Caco-2 (cell line): ENCODE measurements at regions of chr17 and their contacts with region 1.

Region 1: GRCh38 chr17:73956669-73957465 is 246.6 kb upstream of the RPL38 start:
- DNase-seq: peak; percentile 71 to 74
- H3K4me3 ChIP-seq: no peak overlapping the region
- H3K4me3 Mint-ChIP-seq: no peak overlapping the region
- H3K27ac Mint-ChIP-seq: no peak overlapping the region
- H3K4me1 ChIP-seq: peaks cover 18% of the 10 kb centered on the region
- H3K4me1 Mint-ChIP-seq: no peaks in the 10 kb centered on the region
- H3K27me3 ChIP-seq: no peaks in the 10 kb centered on the region
- H3K27me3 Mint-ChIP-seq: no peaks in the 10 kb centered on the region
- CTCF ChIP-seq: peak; percentile 20 to 46

Region 2: GRCh38 chr17:73991254-73991653 is 34.4 kb after region 1 on chr17:
- CTCF ChIA-PET with region 1: no interaction called
- POLR2A ChIA-PET with region 1: no interaction called
- intact Hi-C with region 1: loop called (anchors 5 kb)
- DNase-seq: peak; percentile 48 to 62
- H3K4me3 ChIP-seq: no peak overlapping the region
- H3K4me3 Mint-ChIP-seq: no peak overlapping the region
- H3K27ac Mint-ChIP-seq: no peak overlapping the region
- H3K4me1 ChIP-seq: peaks cover 8% of the 10 kb centered on the region; the same call in 1 of the 2 replicates
- H3K4me1 Mint-ChIP-seq: peaks cover 7% of the 10 kb centered on the region
- H3K27me3 ChIP-seq: no peaks in the 10 kb centered on the region
- H3K27me3 Mint-ChIP-seq: no peaks in the 10 kb centered on the region
- CTCF ChIP-seq: no peak

Region 3: GRCh38 chr17:74135391-74136167 is 178.7 kb after region 1 on chr17:
- CTCF ChIA-PET with region 1: no interaction called
- POLR2A ChIA-PET with region 1: no interaction called
- intact Hi-C with region 1: no loop called
- DNase-seq: peak in 1 of 2 experiments; percentile 9
- H3K4me3 ChIP-seq: no peak overlapping the region
- H3K4me3 Mint-ChIP-seq: no peak overlapping the region
- H3K27ac Mint-ChIP-seq: no peak overlapping the region
- H3K4me1 ChIP-seq: no peaks in the 10 kb centered on the region
- H3K4me1 Mint-ChIP-seq: no peaks in the 10 kb centered on the region
- H3K27me3 ChIP-seq: no peaks in the 10 kb centered on the region
- H3K27me3 Mint-ChIP-seq: peaks cover 19% of the 10 kb centered on the region
- CTCF ChIP-seq: no peak

Region 4: GRCh38 chr17:74199306-74200092 is 242.6 kb after region 1 on chr17:
- CTCF ChIA-PET with region 1: no interaction called
- POLR2A ChIA-PET with region 1: no interaction called
- intact Hi-C with region 1: no loop called
- DNase-seq: peak; percentile 59 to 82
- H3K4me3 ChIP-seq: no peak overlapping the region
- H3K4me3 Mint-ChIP-seq: no peak overlapping the region
- H3K27ac Mint-ChIP-seq: no peak overlapping the region
- H3K4me1 ChIP-seq: no peaks in the 10 kb centered on the region
- H3K4me1 Mint-ChIP-seq: peaks cover 7% of the 10 kb centered on the region
- H3K27me3 ChIP-seq: peaks cover 1% of the 10 kb centered on the region; the same call in 1 of the 2 replicates
- H3K27me3 Mint-ChIP-seq: peaks cover 20% of the 10 kb centered on the region
- CTCF ChIP-seq: peak; percentile 90 to 93